ENCODE measurements at regions of chr16 and their contacts with region 1.

Region 1: DNA sequence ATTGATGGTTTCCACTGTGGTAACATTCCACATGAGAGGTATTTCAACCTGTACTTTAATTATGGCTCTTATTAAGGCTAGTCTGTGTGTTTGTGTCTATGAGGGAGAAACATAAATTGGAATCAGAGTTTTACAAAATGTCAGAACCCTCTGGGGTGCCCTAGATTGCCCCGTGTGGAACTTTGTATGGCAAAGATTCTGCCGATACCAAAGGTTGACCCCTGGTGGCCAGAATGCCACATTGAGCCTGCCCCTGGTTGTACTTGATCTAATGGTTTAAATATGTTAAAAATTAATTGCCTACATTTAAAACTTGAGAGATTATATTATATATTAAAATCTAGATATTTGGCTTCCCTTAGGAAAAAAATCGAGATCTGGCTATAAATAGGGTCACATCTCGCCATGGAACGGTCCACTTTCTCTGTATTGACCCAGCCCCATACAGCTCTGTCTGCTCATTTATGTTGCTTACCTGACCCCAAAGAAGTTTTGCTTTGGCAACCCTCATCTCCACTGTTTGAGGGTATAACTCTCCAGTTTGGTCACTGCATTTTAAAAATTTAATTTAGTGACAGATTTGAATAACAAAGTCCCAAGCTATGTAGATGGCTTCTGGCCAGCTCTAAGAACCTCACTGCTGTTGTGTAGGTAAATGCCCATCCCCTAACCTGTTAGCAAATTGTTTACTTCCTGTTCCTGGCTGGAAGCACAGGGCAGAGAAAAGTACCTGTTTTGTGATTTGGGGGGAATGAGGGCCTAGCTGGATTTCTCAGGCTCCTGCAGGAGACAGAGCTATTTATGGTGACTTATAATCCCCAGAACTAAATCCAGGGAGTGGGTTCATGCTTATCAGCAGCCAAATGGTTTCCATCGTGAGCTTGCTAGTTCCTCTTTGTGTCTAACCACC is 95.0 kb downstream of the PLCG2 start:
- DNase-seq: peak; percentile 63
- CTCF ChIP-seq: peak; percentile 75

Region 2: DNA sequence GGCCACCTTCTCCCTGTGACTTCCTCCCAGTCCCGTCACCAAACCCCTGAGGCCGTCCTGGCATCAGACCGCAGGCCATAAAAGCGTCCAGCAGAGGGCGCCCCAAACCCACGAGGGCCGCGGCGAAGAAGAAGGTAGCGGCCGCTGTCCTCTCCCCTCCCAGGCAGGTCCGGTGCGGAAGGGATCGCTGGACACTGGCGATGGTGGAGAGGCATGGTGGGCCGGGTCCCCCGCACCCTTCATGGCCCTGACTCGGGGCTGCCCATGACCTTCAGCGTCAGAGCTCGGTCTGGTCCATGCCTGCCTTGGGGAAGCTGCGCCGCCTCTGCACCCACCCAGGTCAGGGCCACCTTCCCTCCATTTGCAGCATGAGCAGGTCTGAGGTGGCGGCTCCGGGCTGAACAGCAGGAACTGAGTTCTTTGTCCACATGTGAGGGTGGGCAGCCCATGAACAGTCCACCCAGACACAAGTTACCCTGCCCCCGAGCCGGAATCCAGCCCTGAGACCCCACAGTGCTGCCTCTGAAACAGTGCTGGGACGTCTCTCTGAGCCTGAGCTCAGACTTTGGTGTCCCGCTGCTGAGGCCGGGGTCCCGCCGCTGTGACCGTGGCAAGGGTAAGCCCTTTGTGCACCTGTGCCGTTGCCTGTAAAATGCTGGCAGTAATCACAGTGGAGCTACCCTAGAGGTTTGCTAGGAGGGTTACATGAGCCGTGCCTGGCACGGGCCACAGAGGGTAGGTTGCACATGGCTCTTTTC is 470.3 kb before region 1 on chr16:
- CTCF ChIA-PET with region 1: interaction called, 10 read pairs
- POLR2A ChIA-PET with region 1: no interaction called
- DNase-seq: peak; percentile 92
- CTCF ChIP-seq: peak; percentile 97

Region 3: DNA sequence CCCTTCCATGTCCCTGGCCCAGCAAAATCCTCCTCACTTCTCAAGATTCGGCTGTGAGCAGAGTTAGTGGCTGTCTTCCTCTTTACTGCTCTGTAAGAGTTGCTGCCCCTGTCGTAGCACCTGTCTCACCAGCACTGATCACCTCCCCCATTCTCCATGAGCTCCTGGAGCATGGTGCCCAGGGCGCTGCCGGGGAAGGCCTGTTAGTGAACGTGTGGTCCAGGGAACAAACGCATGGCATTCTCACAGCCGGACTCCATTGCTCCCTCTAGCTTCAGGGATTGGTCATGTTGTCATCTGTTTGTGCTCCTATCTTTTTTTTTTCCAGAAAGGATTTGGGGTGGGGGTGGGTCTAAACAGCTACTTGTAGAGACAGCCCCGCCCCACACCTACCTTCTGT is 288.3 kb before region 1 on chr16:
- CTCF ChIA-PET with region 1: no interaction called
- POLR2A ChIA-PET with region 1: no interaction called
- DNase-seq: no peak
- CTCF ChIP-seq: no peak

Region 4: GRCh38 chr16:81737885-81738786 is 136.0 kb before region 1 on chr16:
- CTCF ChIA-PET with region 1: interaction called, 38 read pairs
- POLR2A ChIA-PET with region 1: no interaction called
- DNase-seq: peak; percentile 87
- CTCF ChIP-seq: peak; percentile 91

Region 5: DNA sequence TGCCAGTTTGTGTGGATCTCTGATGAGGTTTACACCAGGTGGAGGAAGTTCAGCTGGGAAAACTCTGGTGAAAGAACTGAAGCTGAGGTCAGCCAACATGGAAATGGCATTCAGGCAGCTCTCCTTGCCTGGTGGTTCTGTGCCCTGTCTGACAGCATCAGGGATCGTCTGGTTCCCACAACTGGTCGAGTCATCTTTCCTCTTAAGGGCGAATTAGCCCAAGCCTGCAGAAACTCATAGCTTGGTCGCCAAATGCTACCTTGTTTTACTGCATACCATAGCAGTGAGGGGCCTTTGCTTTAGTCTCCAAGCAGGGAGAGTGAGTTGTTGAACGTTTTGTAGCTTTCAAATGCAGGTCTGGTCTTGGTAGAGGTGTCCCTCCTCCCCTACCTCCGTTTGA is 87.8 kb before region 1 on chr16:
- CTCF ChIA-PET with region 1: interaction called, 14 read pairs
- POLR2A ChIA-PET with region 1: no interaction called
- DNase-seq: no peak
- CTCF ChIP-seq: no peak

Region 6: GRCh38 chr16:81848306-81848853 is 25.7 kb before region 1 on chr16:
- CTCF ChIA-PET with region 1: interaction called, 54 read pairs
- POLR2A ChIA-PET with region 1: no interaction called
- DNase-seq: no peak
- CTCF ChIP-seq: no peak

Region 7: DNA sequence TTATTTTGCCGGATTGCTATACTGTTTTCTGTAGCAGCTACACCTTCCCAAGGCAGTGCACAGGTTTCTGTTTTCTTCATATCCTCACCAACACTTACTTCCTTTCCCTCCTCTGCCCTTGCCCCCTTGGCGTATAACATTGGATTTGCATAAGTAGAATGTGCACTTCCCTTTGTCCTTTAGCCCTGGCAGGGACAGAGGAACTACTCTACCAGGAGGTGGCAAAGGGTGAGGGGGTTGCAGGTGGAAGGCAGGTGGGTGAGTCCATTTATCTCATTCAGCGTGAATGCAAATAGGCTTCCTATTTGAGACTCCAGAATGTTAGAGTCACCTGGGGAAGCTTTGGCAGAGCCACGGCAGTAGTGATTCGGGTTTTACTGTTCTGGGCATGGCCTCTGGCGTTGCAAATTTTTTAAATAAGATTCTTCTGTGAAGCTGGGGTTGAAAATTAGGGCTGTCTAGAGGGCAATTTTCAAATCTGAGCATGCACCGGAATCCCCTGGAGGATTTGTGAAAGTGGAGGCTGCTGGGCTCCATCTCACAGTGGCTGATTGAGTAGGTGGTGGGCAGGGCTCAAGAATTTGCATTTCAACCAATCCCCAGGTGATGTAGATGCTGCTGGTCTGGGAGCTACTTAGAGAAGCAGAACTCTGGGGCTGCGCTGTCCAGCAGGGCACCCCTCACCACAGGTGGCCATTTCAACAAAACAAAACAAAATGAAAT is 10.3 kb before region 1 on chr16:
- CTCF ChIA-PET with region 1: interaction called, 56 read pairs
- POLR2A ChIA-PET with region 1: no interaction called
- DNase-seq: peak; percentile 78
- CTCF ChIP-seq: no peak

Region 8: DNA sequence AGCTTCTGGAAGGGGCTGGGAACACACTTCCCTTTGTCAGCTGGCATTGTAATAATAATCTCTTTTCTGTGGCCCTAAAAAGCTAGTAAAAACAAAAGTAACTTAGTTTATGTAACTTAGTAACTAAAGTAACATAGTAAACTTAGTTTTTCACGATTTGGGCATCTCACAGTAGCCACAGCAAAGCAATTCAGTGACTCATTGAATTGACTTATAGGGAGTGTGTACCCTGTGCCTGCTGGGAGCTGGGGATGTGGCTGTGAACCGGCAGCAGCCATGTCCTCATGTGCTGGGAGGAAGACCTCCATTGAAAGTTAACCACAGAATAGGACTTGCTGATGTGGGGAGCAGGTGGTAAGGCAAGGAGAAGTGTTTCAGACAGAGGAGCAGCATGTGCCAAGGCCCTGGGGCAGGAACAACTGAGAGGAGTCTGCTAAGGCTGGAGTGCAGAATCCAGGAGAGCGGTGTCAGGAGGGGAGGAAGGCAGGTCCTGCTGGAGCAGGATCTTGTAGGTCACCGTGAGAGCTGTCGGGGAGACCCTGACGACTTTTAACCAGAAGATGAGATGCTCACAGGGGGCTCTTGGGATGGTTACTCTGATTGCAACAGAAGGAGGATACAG is 17.7 kb after region 1 on chr16:
- CTCF ChIA-PET with region 1: interaction called, 76 read pairs
- POLR2A ChIA-PET with region 1: no interaction called
- DNase-seq: no peak
- CTCF ChIP-seq: no peak

Region 9: DNA sequence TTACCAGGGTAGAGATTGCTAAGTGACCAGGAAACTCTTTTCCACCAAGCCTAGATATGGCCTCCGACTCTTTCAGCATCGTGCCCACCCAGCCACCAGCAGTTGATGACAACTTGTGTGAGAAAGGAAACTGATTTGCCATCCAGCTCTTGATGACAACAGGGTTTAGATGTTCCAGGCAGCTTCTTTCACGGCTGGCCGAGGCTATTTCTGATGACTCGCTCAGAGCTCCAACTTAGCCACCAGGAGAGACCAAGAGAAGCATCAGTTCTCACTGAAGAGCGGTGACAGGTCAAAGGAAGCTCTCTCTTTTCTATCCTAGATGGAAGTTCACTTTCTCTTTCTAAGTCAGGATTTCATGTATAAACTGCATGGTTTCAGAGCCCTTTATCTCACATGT is 234.7 kb after region 1 on chr16:
- CTCF ChIA-PET with region 1: no interaction called
- POLR2A ChIA-PET with region 1: no interaction called
- DNase-seq: no peak
- CTCF ChIP-seq: no peak